CD8-positive, alpha-beta T cell (primary cell): ENCODE measurements at regions of chr5 and their contacts with region 1.

Region 1: GRCh38 chr5:35884115-35884788 is 27.6 kb downstream of the IL7R start:
- DNase-seq: peak in 2 of 9 experiments; percentile 35 to 57
- ATAC-seq: peak; percentile 47
- H3K4me3 ChIP-seq: no peak overlapping the region
- H3K4me3 Mint-ChIP-seq: peak overlapping the region; percentile 3
- H3K27ac ChIP-seq: peak overlapping the region in 1 of 2 experiments; percentile 44
- H3K27ac Mint-ChIP-seq: peak overlapping the region; percentile 89
- H3K4me1 ChIP-seq: peaks cover 26% of the 10 kb centered on the region
- H3K4me1 Mint-ChIP-seq: peaks cover 47% of the 10 kb centered on the region
- H3K27me3 ChIP-seq: no peaks in the 10 kb centered on the region
- H3K27me3 Mint-ChIP-seq: no peaks in the 10 kb centered on the region
- CTCF ChIP-seq: no peak

Region 2: GRCh38 chr5:34976323-34976722 is 907.9 kb before region 1 on chr5:
- CTCF ChIA-PET with region 1: no interaction called
- POLR2A ChIA-PET with region 1: no interaction called
- intact Hi-C with region 1: no loop called
- DNase-seq: no peak
- ATAC-seq: no peak
- H3K4me3 ChIP-seq: no peak overlapping the region
- H3K4me3 Mint-ChIP-seq: no peak overlapping the region
- H3K27ac ChIP-seq: no peak overlapping the region
- H3K27ac Mint-ChIP-seq: no peak overlapping the region
- H3K4me1 ChIP-seq: no peaks in the 10 kb centered on the region
- H3K4me1 Mint-ChIP-seq: no peaks in the 10 kb centered on the region
- H3K27me3 ChIP-seq: no peaks in the 10 kb centered on the region
- H3K27me3 Mint-ChIP-seq: peaks cover 14% of the 10 kb centered on the region
- CTCF ChIP-seq: no peak

Region 3: GRCh38 chr5:35869685-35870277 is 14.5 kb before region 1 on chr5:
- CTCF ChIA-PET with region 1: interaction called, 5 read pairs
- POLR2A ChIA-PET with region 1: interaction called, 30 read pairs
- intact Hi-C with region 1: loop called in 1 of 2 experiments (anchors 1 kb)
- DNase-seq: no peak
- ATAC-seq: peak; percentile 30
- H3K4me3 ChIP-seq: no peak overlapping the region
- H3K4me3 Mint-ChIP-seq: no peak overlapping the region
- H3K27ac ChIP-seq: peak overlapping the region in 1 of 2 experiments; percentile 17
- H3K27ac Mint-ChIP-seq: peak overlapping the region; percentile 85
- H3K4me1 ChIP-seq: peaks cover 61% of the 10 kb centered on the region
- H3K4me1 Mint-ChIP-seq: peaks cover 87% of the 10 kb centered on the region
- H3K27me3 ChIP-seq: no peaks in the 10 kb centered on the region
- H3K27me3 Mint-ChIP-seq: no peaks in the 10 kb centered on the region
- CTCF ChIP-seq: no peak